Sciatic nerve (tissue), 2 donors: ENCODE measurements at regions of chr4 and their contacts with region 1.

Region 1: DNA sequence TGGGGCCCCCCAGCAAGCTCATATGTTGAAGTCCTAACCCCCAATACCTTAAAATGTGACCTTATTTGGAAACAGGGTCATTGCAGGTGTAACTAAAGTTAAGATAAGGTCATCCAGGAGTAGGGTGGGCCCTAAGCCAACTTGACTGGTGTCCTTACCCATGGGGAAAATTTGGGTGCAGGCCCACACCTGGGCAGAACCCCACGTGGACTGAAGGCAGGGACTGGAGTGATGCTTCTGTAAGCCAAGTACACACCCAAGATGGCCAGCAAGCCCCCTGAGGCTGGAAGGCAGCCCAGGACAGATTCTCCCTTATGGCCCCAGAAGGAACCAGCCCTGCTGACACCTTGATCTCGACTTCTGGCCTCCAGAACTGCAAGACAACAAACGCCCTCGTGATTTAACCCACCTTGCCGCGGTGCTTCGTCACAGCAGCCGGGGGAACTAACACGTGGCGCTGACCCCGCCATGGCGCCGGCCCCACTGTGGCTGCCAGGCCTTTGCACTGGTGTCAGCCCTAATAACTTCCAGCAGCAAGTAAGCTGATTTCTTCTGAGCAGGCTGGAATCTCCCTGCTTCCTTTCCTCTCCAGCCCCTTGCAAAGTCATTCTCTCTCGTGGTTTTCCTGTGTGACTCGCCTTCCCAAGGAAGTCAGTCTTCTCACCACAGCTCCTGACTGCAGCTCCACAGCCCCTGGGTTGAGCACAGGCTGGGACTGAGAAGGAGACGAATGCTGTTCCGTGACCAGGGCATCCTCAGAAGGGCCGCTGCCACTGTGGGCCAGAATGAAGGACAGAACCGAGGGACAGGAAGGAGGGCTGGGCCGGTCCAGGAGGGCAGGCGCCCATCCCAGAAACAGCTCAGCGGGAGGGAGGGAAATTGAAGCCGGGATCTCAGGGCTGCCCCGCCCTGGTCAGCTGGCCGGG is 23.3 kb upstream of the MXD4 start:
- DNase-seq: peak; percentile 37
- ATAC-seq: no peak

Region 2: GRCh38 chr4:2441393-2442174 is 156.4 kb after region 1 on chr4:
- intact Hi-C with region 1: loop called (anchors 5 kb)
- DNase-seq: no peak
- ATAC-seq: peak; percentile 49